HepG2 (cell line): ENCODE measurements at regions of chr11 and their contacts with region 1.

Region 1: GRCh38 chr11:15730617-15731385 is 616.1 kb downstream of the INSC start:
- DNase-seq: no peak
- ATAC-seq: no peak
- H3K4me3 ChIP-seq: no peak overlapping the region
- H3K27ac ChIP-seq: no peak overlapping the region
- H3K4me1 ChIP-seq: no peaks in the 10 kb centered on the region
- H3K27me3 ChIP-seq: no peaks in the 10 kb centered on the region
- CTCF ChIP-seq: no peak
- EP300 ChIP-seq: no peak
- POLR2A ChIP-seq: no peak
- RAD21 ChIP-seq: no peak

Region 2: DNA sequence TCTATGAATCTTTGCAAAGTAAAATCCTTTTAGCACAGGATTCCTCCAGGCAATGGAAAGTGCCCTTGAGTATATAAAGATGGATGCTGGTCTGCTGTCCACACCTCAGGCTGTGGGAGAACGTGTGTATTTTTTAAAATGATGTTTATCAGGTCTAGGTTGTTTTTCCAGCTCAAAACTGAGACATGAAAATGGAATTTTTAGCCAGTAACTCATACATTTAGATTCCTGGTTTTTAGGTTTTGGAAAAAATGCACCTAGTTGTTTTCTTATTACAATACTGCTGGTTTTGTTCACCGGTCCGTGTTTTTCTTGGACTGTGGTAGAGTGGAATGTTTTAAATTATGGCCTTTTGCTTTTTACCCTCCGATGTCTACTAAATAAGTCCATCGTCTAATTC is 70.8 kb after region 1 on chr11:
- CTCF ChIA-PET with region 1: no interaction called
- POLR2A ChIA-PET with region 1: no interaction called
- in situ Hi-C with region 1: no loop called
- intact Hi-C with region 1: loop called (anchors 2 kb)
- DNase-seq: no peak
- ATAC-seq: no peak
- H3K4me3 ChIP-seq: no peak overlapping the region
- H3K27ac ChIP-seq: no peak overlapping the region
- H3K4me1 ChIP-seq: no peaks in the 10 kb centered on the region
- H3K27me3 ChIP-seq: no peaks in the 10 kb centered on the region; a peak in 1 of 5 replicates
- CTCF ChIP-seq: no peak
- EP300 ChIP-seq: no peak
- POLR2A ChIP-seq: no peak
- RAD21 ChIP-seq: no peak